Esophagus muscularis mucosa (tissue), 4 donors: ENCODE measurements at regions of chr7 and their contacts with region 1.

Region 1: GRCh38 chr7:138886501-138886917 is 88.5 kb upstream of the ATP6V0A4 start:
- DNase-seq: no peak
- H3K4me3 ChIP-seq: no peak overlapping the region
- H3K27ac ChIP-seq: no peak overlapping the region
- H3K4me1 ChIP-seq: peaks cover 0 to 11% (median 4%) of the 10 kb centered on the region in 4 donors
- H3K27me3 ChIP-seq: no peaks in the 10 kb centered on the region
- CTCF ChIP-seq: peak; percentile 51 to 63 (median 52)
- EP300 ChIP-seq: no peak
- POLR2A ChIP-seq: no peak

Region 2: GRCh38 chr7:138981332-138982203 is 95.1 kb after region 1 on chr7 and contains the start of gene KIAA1549:
- intact Hi-C with region 1: loop called (anchors 10 kb)
- DNase-seq: no peak
- H3K4me3 ChIP-seq: peak within 1 kb of the TSS; percentile 59 to 74 (median 65)
- H3K27ac ChIP-seq: peak within 1 kb of the TSS; percentile 18 to 64 (median 46)
- H3K4me1 ChIP-seq: peaks cover 0 to 22% (median 20%) of the 10 kb centered on the region in 4 donors
- H3K27me3 ChIP-seq: no peaks in the 10 kb centered on the region
- CTCF ChIP-seq: peak in 2 of 3 experiments; percentile 37 to 43
- EP300 ChIP-seq: no peak
- POLR2A ChIP-seq: no peak
- total RNA-seq, gene KIAA1549: 2.3 to 3.2 (median 2.8) TPM

Region 3: DNA sequence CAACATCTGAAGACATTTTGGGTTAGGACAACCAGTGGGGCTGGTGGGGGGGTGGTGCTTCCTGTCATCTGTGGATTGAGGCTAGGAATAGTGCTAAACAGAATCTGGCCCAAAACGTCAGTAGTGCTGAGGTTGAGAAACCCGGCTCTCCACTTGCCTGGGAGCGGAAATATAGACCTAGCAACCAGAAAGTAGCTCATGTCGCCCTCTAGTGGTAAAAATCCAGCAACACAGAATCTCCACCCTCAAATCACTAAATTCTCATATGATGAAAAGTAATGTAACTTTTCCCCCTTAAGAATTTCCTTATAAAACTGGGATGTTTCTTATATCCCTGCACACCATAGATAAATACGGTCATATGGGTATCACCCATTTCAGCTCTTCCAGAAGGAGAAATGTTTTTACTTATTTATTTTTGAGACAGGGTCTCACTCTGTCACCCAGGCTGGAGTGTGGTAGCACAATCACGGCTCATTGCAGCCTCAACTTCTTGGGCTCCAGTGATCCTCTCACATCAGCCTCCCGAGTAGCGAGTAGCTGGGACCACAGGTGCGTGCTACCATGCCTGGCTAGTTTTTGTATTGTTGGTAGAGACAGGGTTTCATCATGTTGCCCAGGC is 188.6 kb after region 1 on chr7:
- intact Hi-C with region 1: loop called (anchors 2 kb)
- DNase-seq: peak; percentile 92
- H3K4me3 ChIP-seq: no peak overlapping the region
- H3K27ac ChIP-seq: peak overlapping the region in 2 of 4 donors; percentile 34 to 42
- H3K4me1 ChIP-seq: peaks cover 0 to 6% (median 3%) of the 10 kb centered on the region in 4 donors
- H3K27me3 ChIP-seq: no peaks in the 10 kb centered on the region
- CTCF ChIP-seq: peak; percentile 74 to 86 (median 86)
- EP300 ChIP-seq: no peak
- POLR2A ChIP-seq: no peak

Region 4: DNA sequence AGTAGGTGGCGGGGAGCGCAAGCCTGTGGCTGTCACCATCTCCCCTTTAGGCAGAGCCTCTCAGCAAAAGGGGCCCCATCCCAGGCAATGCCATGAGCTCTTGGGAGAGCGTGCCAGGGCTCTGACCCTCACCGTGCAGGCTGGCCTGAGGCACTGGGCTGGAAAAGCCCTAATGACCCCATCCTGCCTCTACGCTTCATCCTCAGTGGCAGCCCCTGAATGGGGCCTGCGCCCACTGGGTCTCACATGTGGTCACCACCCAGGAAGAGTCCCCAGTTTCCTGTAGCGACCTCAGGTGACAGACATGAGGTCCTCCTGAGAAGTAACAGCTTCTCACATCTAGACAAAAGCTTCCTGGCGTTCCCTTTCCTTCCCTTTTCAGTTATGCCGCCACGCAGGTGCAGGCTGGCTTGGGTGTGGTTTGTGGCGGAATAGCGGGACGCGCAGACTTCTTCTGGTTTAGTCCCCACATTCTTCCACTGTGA is 696.2 kb after region 1 on chr7:
- intact Hi-C with region 1: no loop called
- DNase-seq: no peak
- H3K4me3 ChIP-seq: no peak overlapping the region
- H3K27ac ChIP-seq: no peak overlapping the region
- H3K4me1 ChIP-seq: peaks cover 0 to 10% (median 5%) of the 10 kb centered on the region in 4 donors
- H3K27me3 ChIP-seq: no peaks in the 10 kb centered on the region
- CTCF ChIP-seq: no peak
- EP300 ChIP-seq: no peak
- POLR2A ChIP-seq: no peak